ENCODE measurements at regions of chr12 and their contacts with region 1.

Region 1: GRCh38 chr12:93390549-93391297 is 13.0 kb downstream of the NUDT4 start:
- DNase-seq: no peak
- H3K4me3 ChIP-seq: no peak overlapping the region
- H3K27ac ChIP-seq: peak overlapping the region in 4 of 59 donors; percentile 8 to 48 (median 29)
- H3K27me3 ChIP-seq: no peaks in the 10 kb centered on the region
- CTCF ChIP-seq: no peak

Region 2: DNA sequence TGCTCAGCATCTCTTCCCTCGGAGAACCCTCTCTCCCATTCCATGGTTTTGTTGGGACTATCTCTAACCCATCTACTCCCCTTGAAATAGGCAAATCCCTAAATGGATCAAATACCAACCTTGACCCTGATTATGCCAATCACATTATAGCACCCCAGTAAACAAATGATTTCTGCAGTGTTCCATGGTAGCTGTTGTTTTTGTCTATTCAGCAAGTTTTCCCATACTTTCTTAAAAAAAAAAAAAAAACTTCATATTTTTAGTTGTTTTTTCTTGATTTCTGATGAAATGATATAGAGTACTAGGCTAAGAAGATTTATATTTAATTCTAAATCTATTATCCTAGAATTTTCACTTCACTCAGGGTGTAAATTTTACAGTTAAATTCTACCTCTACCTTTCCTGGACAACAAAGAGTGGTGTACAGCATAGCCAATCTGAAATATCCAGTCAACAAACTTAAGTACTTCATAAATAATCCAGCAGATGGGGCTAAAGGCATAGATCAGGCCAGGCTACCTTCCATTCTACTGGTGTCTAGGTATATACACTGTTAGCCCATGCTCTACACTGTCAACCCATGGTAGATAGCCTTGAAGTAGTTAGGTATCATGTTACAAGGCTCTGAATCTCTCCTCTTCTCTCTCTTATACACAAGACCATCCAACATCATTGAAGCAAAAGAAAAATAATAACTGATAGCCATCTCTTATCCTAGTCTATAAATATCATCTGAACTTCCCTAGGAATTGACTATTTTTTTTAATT is 605.7 kb before region 1 on chr12:
- intact Hi-C with region 1: loop called in 1 of 2 experiments (anchors 10 kb)
- DNase-seq: peak in 1 of 10 donors; percentile 22
- H3K4me3 ChIP-seq: no peak overlapping the region
- H3K27ac ChIP-seq: peak overlapping the region in 2 of 59 donors; percentile 6 to 7
- H3K27me3 ChIP-seq: no peaks in the 10 kb centered on the region
- CTCF ChIP-seq: peak in 55 of 56 donors; percentile 30 to 78 (median 56)

Region 3: GRCh38 chr12:93025145-93025805 is 365.4 kb before region 1 on chr12:
- intact Hi-C with region 1: loop called in 1 of 2 experiments (anchors 10 kb)
- DNase-seq: no peak
- H3K4me3 ChIP-seq: no peak overlapping the region
- H3K27ac ChIP-seq: no peak overlapping the region
- H3K27me3 ChIP-seq: no peaks in the 10 kb centered on the region
- CTCF ChIP-seq: peak in 53 of 56 donors; percentile 20 to 66 (median 42)

Region 4: GRCh38 chr12:93279565-93280412 is 110.9 kb before region 1 on chr12:
- intact Hi-C with region 1: no loop called
- DNase-seq: no peak
- H3K4me3 ChIP-seq: no peak overlapping the region
- H3K27ac ChIP-seq: no peak overlapping the region
- H3K27me3 ChIP-seq: no peaks in the 10 kb centered on the region
- CTCF ChIP-seq: no peak

Measured in dorsolateral prefrontal cortex (tissue), 120 donors.